Calu3 (cell line): ENCODE measurements at regions of chr1 and their contacts with region 1.

Region 1: DNA sequence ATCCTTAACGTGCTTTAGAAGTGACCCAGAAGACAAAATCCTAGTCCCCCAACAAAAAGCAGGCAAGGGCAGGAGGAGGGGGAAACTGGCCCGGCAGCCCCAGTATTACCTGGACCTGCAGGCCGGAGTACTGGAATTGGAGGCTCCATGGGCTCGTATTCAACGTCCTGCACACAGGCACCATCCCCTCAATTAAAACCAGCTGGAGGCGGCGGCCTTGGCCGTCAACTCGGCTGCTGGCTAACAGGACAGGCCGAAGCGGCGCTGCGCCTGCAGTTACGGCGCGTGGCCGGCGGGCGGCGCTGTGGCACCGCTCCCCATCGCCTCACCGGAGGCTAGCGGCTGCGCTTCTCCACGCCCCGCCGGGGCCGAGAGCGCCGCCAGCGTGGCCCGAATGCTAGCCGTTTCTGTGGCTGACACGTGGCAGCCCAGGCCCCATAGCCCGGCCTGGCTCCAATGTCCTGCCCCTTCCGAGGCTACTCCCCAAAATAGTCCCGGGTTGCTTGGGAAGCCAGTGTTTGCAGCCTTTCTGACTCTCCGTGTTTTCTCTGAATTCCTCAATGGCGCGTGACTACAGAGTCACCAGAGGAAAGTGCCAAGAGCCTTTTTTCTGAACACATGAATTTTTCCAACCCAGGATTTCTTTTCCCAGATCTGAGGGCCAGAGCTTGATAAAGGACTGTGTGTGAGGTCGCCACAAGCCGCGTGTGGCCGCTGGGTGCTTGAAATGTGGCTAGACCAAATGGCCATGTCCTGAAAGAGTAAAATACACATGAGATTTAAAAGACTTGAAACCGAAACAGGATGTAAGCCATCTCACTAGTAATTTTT is 82.5 kb downstream of the HHIPL2 start:
- DNase-seq: peak; percentile 95
- H3K4me3 Mint-ChIP-seq: peak overlapping the region; percentile 60
- H3K27ac Mint-ChIP-seq: peak overlapping the region; percentile 89
- H3K4me1 Mint-ChIP-seq: no peaks in the 10 kb centered on the region
- H3K27me3 Mint-ChIP-seq: peaks cover 12% of the 10 kb centered on the region
- CTCF ChIP-seq: peak; percentile 99

Region 2: DNA sequence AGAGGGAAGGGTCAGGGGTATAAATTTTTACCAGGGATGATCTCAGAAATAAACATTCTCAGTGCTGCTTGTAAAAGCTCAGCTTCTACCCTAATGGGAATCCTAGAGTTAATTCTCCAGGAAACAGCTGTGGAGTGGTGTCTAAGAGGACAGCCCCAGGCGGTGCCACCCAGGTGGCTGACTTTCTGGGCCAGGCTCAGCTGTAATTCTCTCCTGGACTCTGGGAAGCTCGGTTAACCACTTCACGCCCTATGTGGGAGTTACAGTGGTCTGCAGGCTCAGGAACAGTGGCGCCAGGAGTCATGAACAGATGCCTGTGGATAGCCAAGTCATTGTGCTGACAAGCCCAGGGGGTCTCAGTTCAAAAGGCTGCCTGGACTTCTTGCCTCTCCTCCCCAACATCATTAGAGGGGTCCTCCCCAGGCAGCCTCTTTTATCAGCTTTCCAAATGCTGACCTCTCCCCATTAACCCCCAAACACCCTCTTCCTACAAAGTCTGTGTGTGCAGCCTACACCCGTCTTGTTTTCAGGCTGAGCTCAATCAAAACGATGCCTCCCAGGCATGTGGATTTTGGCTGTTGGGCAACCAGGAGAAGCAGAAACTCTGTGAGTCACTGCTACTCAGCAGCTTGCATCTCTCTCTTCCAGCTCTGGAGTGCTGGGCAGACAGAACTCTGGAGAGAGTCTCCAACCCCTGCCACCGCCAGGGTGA is 81.3 kb after region 1 on chr1:
- CTCF ChIA-PET with region 1: no interaction called
- intact Hi-C with region 1: no loop called
- DNase-seq: peak; percentile 13
- H3K4me3 Mint-ChIP-seq: no peak overlapping the region
- H3K27ac Mint-ChIP-seq: no peak overlapping the region
- H3K4me1 Mint-ChIP-seq: peaks cover 18% of the 10 kb centered on the region
- H3K27me3 Mint-ChIP-seq: peaks cover 41% of the 10 kb centered on the region
- CTCF ChIP-seq: no peak

Region 3: GRCh38 chr1:222634180-222635013 is 169.0 kb after region 1 on chr1:
- CTCF ChIA-PET with region 1: interaction called, 30 read pairs
- intact Hi-C with region 1: loop called (anchors 1 kb)
- DNase-seq: peak; percentile 83
- H3K4me3 Mint-ChIP-seq: no peak overlapping the region
- H3K27ac Mint-ChIP-seq: no peak overlapping the region
- H3K4me1 Mint-ChIP-seq: no peaks in the 10 kb centered on the region
- H3K27me3 Mint-ChIP-seq: no peaks in the 10 kb centered on the region
- CTCF ChIP-seq: peak; percentile 56

Region 4: GRCh38 chr1:222665964-222666363 is 200.5 kb after region 1 on chr1:
- CTCF ChIA-PET with region 1: no interaction called
- intact Hi-C with region 1: no loop called
- DNase-seq: no peak
- H3K4me3 Mint-ChIP-seq: no peak overlapping the region
- H3K27ac Mint-ChIP-seq: no peak overlapping the region
- H3K4me1 Mint-ChIP-seq: no peaks in the 10 kb centered on the region
- H3K27me3 Mint-ChIP-seq: no peaks in the 10 kb centered on the region
- CTCF ChIP-seq: no peak

Region 5: GRCh38 chr1:222713091-222713961 is 247.9 kb after region 1 on chr1:
- CTCF ChIA-PET with region 1: no interaction called
- intact Hi-C with region 1: loop called (anchors 10 kb)
- DNase-seq: peak; percentile 94
- H3K4me3 Mint-ChIP-seq: peak overlapping the region; percentile 93
- H3K27ac Mint-ChIP-seq: peak overlapping the region; percentile 94
- H3K4me1 Mint-ChIP-seq: peaks cover 26% of the 10 kb centered on the region
- H3K27me3 Mint-ChIP-seq: no peaks in the 10 kb centered on the region
- CTCF ChIP-seq: no peak